ENCODE measurements at regions of chr16 and their contacts with region 1.

Region 1: DNA sequence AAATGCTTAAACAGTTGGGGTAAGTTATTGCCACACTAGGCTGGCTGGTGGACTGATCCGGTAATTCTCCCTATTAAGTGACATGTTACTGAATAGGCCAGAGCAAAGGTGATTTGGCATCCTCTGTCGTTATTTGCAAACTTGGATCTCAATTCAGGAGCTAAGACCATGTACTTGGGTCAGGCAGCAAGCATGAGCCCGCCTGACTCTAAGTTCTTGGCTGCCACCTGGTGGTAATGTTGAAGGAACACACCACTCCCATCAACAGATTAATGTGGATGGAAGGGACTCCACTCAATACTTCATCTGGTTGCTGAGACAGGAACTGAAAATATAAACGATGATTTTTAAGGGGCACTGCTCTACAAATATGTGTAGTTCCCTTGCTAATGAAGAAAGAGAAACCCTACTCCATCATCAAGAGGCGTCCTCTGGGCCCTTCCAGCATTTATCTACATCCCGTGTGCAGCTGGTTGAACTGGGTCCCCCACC is 70.8 kb downstream of the EMP2 start:
- DNase-seq: peak; percentile 56 to 70
- H3K4me3 ChIP-seq: no peak overlapping the region
- H3K27ac ChIP-seq: no peak overlapping the region
- H3K4me1 ChIP-seq: peaks cover 0 to 4% of the 10 kb centered on the region in 2 donors
- H3K27me3 ChIP-seq: no peaks in the 10 kb centered on the region
- CTCF ChIP-seq: peak; percentile 57 to 89 (median 82)
- POLR2A ChIP-seq: no peak

Region 2: DNA sequence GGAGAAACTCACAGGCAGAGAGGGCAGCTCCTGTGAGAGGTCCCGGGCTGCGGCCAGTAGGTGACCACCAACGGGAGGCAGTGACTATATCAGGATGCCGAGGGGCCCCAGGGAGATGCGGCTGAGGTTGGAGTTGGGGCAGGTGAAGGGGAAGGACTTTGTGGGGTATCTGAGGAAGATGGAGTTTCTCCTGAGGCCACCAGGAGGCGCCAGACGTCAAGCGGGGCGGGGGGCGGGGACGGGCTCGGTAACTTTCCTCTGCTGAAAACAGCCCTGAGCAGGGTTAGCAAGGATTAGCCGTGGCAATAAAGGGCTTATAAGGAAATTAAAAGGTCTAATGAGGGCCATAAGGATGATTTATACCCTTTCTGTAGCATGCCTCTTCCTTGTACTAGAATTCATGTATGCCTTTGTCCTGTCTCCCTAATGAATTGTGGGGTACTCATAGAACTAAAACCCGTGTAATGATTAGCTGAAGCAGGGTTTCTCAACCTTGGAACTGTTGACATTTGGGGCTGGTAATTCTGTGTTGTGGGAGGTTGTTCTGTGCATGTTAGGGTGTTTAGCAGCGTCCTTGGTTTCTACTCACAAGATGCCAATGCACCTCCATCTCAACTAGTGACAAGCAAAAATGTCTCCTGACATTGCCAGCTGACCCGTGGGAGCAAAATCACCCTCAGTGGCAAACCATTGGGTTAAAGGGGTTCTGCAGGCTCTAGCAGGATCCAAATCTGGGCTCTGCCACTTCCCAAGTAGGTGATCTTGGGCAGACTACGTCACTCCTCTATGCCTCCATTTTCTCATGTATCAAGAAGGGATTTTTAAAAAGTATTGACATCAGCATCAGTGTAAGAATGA is 252.6 kb before region 1 on chr16:
- intact Hi-C with region 1: loop called (anchors 2 kb)
- DNase-seq: peak; percentile 27 to 52
- H3K4me3 ChIP-seq: no peak overlapping the region
- H3K27ac ChIP-seq: peak overlapping the region in 1 of 3 donors; percentile 36
- H3K4me1 ChIP-seq: peaks cover 11 to 27% of the 10 kb centered on the region in 2 donors
- H3K27me3 ChIP-seq: no peaks in the 10 kb centered on the region
- CTCF ChIP-seq: peak; percentile 54 to 94 (median 73)
- POLR2A ChIP-seq: no peak

Region 3: GRCh38 chr16:10408824-10409381 is 100.7 kb before region 1 on chr16:
- intact Hi-C with region 1: no loop called
- DNase-seq: no peak
- H3K4me3 ChIP-seq: no peak overlapping the region
- H3K27ac ChIP-seq: no peak overlapping the region
- H3K4me1 ChIP-seq: no peaks in the 10 kb centered on the region
- H3K27me3 ChIP-seq: no peaks in the 10 kb centered on the region
- CTCF ChIP-seq: no peak
- POLR2A ChIP-seq: no peak

Region 4: DNA sequence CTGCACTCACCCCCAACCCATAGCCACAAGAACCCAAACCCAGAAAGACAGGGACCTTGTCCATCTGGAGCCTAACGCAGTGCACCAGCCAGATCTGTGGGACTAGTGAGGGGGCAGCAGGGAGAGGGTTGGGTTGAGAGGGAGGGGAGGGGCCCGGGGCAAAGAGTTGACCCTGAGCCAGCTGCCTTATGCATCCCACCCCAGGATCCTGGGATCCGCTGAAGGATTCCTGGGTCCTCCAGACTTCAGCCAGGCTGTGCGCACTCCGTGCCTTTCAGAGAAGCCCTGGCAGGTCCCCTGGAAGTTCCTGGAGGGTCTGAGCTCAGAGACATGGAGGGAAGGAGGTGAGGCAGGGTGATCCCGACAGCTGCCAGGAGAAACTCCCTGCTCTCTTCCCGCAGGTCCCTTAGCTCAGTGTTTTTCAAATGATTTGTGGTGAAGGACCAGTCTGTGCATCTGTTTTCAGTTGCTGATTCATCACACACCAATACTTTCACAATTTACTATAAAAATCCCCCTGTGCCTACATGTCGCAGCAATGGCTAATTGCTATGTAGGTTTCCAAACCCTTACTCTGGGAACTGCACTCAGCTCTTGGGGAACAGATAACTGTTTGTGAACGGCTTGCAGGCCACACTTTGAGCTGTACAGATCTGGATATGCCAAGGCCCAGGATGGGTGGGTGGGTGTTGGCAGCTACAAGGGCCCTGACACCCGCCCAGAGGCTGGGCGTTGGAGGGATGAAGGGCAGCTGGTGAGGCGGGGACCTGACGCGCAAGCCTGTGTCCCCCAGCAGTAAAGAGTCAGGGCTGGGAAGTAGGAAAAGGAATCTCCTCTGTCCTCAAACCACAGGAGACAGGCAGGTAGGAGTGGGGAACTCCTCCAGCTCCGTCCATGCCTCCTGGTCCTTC is 91.2 kb after region 1 on chr16:
- intact Hi-C with region 1: no loop called
- DNase-seq: no peak
- H3K4me3 ChIP-seq: no peak overlapping the region
- H3K27ac ChIP-seq: no peak overlapping the region
- H3K4me1 ChIP-seq: no peaks in the 10 kb centered on the region
- H3K27me3 ChIP-seq: no peaks in the 10 kb centered on the region
- CTCF ChIP-seq: no peak
- POLR2A ChIP-seq: no peak